Upper lobe of right lung (tissue), 1 donor: ENCODE measurements at regions of chr1 and their contacts with region 1.

Region 1: DNA sequence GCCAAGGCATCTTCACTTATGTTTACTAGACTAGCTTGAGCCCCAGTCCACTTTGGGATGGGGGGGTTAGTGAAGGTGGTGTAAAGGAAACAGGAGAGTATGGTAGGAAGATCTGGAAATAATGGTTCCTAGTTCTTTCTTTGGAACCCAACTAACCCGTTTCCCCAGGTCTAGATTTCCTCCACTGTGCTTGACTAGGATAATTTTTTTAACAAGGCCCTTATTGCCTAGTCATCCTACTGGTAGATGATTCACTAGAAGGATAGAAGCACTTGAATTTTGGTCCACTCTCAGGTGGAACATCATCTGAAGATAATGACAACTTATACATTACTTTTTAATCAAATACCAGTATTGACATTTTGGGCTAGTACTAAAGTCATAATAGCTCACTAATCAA is 45.9 kb upstream of the MYOCOS start:
- DNase-seq: no peak
- ATAC-seq: no peak
- H3K4me3 ChIP-seq: no peak overlapping the region
- H3K27ac ChIP-seq: no peak overlapping the region
- H3K4me1 ChIP-seq: no peaks in the 10 kb centered on the region
- H3K27me3 ChIP-seq: no peaks in the 10 kb centered on the region
- CTCF ChIP-seq: no peak

Region 2: GRCh38 chr1:170729225-170730002 is 846.7 kb before region 1 on chr1:
- intact Hi-C with region 1: no loop called
- DNase-seq: no peak
- ATAC-seq: no peak
- H3K4me3 ChIP-seq: no peak overlapping the region
- H3K27ac ChIP-seq: no peak overlapping the region
- H3K4me1 ChIP-seq: no peaks in the 10 kb centered on the region
- H3K27me3 ChIP-seq: no peaks in the 10 kb centered on the region
- CTCF ChIP-seq: no peak

Region 3: GRCh38 chr1:171521567-171521966 is 54.6 kb before region 1 on chr1:
- intact Hi-C with region 1: loop called (anchors 10 kb)
- DNase-seq: no peak
- ATAC-seq: no peak
- H3K4me3 ChIP-seq: no peak overlapping the region
- H3K27ac ChIP-seq: no peak overlapping the region
- H3K4me1 ChIP-seq: no peaks in the 10 kb centered on the region
- H3K27me3 ChIP-seq: no peaks in the 10 kb centered on the region
- CTCF ChIP-seq: no peak

Region 4: DNA sequence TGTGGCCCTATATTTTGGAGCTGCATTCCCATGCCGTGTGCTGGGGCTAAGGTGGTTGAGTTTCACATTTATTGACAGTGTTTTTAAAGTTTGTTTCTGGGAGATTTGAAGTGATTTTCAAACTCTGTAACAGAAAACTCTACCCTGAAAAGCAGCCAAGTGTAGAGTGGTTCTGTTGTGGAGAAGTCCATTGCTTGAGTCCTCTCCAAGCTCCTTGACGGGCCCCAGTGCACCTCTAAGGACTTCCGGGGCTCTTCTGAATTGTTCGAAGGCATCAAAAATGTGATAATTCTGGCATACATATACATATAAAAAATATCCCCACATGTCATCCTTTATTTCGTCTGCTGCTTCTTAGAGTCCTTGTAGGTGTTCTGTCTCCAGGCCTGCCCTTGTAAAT is 50.9 kb after region 1 on chr1:
- intact Hi-C with region 1: no loop called
- DNase-seq: no peak
- ATAC-seq: peak; percentile 50
- H3K4me3 ChIP-seq: no peak overlapping the region
- H3K27ac ChIP-seq: no peak overlapping the region
- H3K4me1 ChIP-seq: no peaks in the 10 kb centered on the region
- H3K27me3 ChIP-seq: no peaks in the 10 kb centered on the region
- CTCF ChIP-seq: no peak

Region 5: GRCh38 chr1:171715813-171716251 is 139.7 kb after region 1 on chr1:
- intact Hi-C with region 1: no loop called
- DNase-seq: no peak
- ATAC-seq: no peak
- H3K4me3 ChIP-seq: no peak overlapping the region
- H3K27ac ChIP-seq: no peak overlapping the region
- H3K4me1 ChIP-seq: no peaks in the 10 kb centered on the region
- H3K27me3 ChIP-seq: no peaks in the 10 kb centered on the region
- CTCF ChIP-seq: peak; percentile 42

Region 6: DNA sequence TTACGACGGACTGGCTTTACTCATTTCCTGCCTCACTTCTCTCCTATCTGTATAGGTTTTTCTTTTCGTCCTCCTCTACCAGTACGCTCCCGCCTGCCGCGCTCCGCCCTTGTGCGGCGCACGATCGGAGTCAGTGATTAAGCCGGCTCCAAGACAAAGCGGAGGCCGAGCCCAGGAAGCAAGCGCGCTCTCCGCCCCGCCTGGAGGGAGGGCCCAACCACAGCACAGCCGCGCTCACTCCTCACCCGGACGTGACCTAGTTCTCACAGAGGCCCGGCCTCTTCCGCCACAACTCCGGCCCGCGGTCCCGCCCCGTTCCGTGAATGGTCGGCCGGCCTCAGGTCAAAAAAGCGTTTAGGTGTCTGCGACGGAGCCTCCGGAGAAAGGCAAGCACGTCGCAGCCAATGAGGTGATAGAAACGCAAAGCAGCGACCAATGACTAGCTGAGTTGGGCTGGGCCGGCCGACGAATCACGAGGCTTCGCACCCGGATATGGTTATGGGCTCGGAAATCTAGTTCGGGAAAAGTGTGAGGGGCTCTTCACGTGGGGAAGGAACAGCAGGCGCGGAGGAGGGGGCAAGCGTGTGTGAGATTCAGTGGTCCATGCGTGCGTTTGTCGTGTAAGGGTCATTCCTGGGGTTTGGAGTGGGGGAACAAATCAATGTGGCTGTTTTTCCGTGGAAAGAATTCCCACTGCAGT is 205.2 kb after region 1 on chr1 and contains the start of gene METTL13:
- intact Hi-C with region 1: no loop called
- DNase-seq: peak; percentile 99
- ATAC-seq: peak; percentile 99
- H3K4me3 ChIP-seq: peak within 1 kb of the TSS; percentile 81
- H3K27ac ChIP-seq: peak within 1 kb of the TSS; percentile 84
- H3K4me1 ChIP-seq: peaks cover 16% of the 10 kb centered on the region
- H3K27me3 ChIP-seq: no peaks in the 10 kb centered on the region
- CTCF ChIP-seq: no peak
- total RNA-seq, gene METTL13: 27.8 TPM